ENCODE measurements at regions of chr1 and their contacts with region 1.

Region 1: GRCh38 chr1:157829711-157830110 is 9.8 kb upstream of the FCRL1 start:
- DNase-seq: no peak
- H3K4me3 ChIP-seq: no peak overlapping the region
- H3K27ac ChIP-seq: no peak overlapping the region
- H3K4me1 ChIP-seq: peaks cover 37% of the 10 kb centered on the region
- CTCF ChIP-seq: no peak

Region 2: DNA sequence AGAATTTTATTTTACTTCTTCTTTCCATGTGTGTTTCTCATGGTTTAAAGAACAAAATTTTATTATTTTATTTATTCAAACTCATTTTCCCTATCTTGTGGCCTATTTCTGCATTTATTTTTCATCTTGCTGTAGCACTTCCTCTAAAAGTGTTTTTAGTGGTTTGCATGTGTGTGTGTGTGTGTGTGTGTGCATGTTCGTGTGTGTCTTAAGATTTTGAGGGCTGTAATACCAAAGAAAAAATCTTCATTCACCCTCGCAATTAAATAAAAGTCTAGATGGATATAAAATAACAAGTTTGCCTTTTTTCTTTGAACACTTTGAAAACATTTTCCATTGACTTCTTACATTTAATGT is 104.5 kb before region 1 on chr1:
- CTCF ChIA-PET with region 1: no interaction called
- POLR2A ChIA-PET with region 1: no interaction called
- intact Hi-C with region 1: no loop called
- DNase-seq: peak; percentile 71
- H3K4me3 ChIP-seq: peak overlapping the region; percentile 61
- H3K27ac ChIP-seq: peak overlapping the region; percentile 93
- H3K4me1 ChIP-seq: peaks cover 45% of the 10 kb centered on the region
- CTCF ChIP-seq: no peak

Region 3: DNA sequence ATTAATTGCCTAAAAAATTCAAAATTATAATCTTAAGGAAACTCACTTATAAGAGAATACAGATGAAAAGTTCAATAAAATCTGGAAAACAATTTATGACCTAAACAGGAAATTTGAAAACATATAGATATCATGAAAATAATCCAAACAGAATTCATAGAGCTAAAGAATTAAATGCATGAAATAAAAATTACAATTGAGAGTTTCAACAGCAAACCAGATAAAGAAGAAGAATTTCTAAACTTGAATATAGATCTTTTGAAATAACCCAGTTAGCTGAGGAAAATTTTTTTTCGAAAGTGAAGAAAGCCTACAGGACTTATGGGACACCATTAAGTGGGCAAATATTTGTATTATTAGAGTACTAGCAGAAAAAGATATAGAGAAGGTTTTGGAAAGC is 16.4 kb before region 1 on chr1:
- CTCF ChIA-PET with region 1: no interaction called
- POLR2A ChIA-PET with region 1: interaction called, 14 read pairs
- intact Hi-C with region 1: no loop called
- DNase-seq: peak; percentile 42
- H3K4me3 ChIP-seq: no peak overlapping the region
- H3K27ac ChIP-seq: no peak overlapping the region
- H3K4me1 ChIP-seq: peaks cover 75% of the 10 kb centered on the region
- CTCF ChIP-seq: no peak

Region 4: GRCh38 chr1:157844089-157844830 is 14.5 kb after region 1 on chr1:
- CTCF ChIA-PET with region 1: interaction called, 3 read pairs
- POLR2A ChIA-PET with region 1: interaction called, 20 read pairs
- intact Hi-C with region 1: no loop called
- DNase-seq: no peak
- H3K4me3 ChIP-seq: no peak overlapping the region
- H3K27ac ChIP-seq: no peak overlapping the region
- H3K4me1 ChIP-seq: peaks cover 75% of the 10 kb centered on the region
- CTCF ChIP-seq: no peak

Region 5: GRCh38 chr1:157849229-157849875 is 19.6 kb after region 1 on chr1:
- CTCF ChIA-PET with region 1: interaction called, 3 read pairs
- POLR2A ChIA-PET with region 1: interaction called, 10 read pairs
- intact Hi-C with region 1: no loop called
- DNase-seq: peak; percentile 87
- H3K4me3 ChIP-seq: peak overlapping the region; percentile 56
- H3K27ac ChIP-seq: peak overlapping the region; percentile 90
- H3K4me1 ChIP-seq: peaks cover 63% of the 10 kb centered on the region
- CTCF ChIP-seq: no peak; the same call in 1 of the 2 replicates

Measured in OCI-LY7 (cell line).